PC-9 (cell line): ENCODE measurements at regions of chr7 and their contacts with region 1.

Region 1: GRCh38 chr7:51162724-51163329 is 153.8 kb downstream of the COBL start:
- DNase-seq: peak; percentile 80 to 81
- H3K4me3 ChIP-seq: no peak overlapping the region
- H3K27ac ChIP-seq: no peak overlapping the region
- H3K4me1 ChIP-seq: peaks cover 5% of the 10 kb centered on the region; the same call in 1 of the 2 replicates
- H3K27me3 ChIP-seq: no peaks in the 10 kb centered on the region
- CTCF ChIP-seq: peak; percentile 99

Region 2: DNA sequence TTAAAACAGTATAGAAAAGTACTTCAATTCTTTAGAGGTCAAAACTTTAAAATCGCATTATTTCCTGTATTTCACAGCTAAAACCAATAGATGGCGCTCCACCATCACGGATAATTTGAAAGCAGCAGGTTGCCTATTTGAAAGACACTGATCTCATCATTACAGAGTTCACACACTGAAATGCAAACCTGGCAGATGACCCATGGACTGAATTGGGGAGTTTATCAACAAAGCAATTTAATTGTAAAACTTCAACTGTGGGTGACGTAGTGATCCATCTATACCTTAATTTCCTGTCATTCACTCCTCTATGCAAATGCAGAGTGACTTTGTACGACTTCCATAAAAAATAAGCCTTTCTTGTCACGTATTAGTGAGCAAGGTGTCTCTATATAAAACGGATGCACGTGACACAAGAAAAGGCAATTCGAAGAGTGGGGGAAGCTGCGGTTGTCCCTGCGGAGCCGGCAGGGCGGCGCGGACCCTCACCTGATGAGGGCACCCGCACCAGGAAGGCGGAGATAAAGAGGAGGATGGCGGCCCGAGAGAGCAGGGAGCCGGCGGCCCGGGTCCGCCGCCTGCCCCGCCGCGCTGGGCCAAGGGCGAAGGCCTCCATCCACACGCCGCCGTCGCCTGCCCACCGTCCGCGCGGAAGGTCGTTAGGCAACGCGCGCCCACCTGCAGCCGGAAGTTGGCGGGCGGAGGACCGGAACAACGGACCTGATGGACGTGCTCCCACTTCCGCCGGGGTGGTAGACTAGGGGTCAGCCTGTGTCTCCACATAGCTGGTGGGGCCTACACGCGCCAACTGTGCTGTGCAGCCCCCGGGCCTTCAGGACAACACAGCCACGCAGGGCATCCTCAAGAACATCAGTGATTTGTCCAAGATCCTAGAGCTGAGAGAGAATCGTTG is 1070.0 kb before region 1 on chr7 and contains the start of gene ZPBP:
- CTCF ChIA-PET with region 1: interaction called, 10 read pairs
- POLR2A ChIA-PET with region 1: interaction called, 3 read pairs
- intact Hi-C with region 1: loop called (anchors 1 kb)
- DNase-seq: no peak
- H3K4me3 ChIP-seq: no peak within 1 kb of the TSS
- H3K27ac ChIP-seq: no peak within 1 kb of the TSS
- H3K4me1 ChIP-seq: no peaks in the 10 kb centered on the region
- H3K27me3 ChIP-seq: peaks cover 8% of the 10 kb centered on the region; the same call in 1 of the 2 replicates
- CTCF ChIP-seq: peak; percentile 94
- total RNA-seq, gene ZPBP: not detected in 2 replicates

Region 3: DNA sequence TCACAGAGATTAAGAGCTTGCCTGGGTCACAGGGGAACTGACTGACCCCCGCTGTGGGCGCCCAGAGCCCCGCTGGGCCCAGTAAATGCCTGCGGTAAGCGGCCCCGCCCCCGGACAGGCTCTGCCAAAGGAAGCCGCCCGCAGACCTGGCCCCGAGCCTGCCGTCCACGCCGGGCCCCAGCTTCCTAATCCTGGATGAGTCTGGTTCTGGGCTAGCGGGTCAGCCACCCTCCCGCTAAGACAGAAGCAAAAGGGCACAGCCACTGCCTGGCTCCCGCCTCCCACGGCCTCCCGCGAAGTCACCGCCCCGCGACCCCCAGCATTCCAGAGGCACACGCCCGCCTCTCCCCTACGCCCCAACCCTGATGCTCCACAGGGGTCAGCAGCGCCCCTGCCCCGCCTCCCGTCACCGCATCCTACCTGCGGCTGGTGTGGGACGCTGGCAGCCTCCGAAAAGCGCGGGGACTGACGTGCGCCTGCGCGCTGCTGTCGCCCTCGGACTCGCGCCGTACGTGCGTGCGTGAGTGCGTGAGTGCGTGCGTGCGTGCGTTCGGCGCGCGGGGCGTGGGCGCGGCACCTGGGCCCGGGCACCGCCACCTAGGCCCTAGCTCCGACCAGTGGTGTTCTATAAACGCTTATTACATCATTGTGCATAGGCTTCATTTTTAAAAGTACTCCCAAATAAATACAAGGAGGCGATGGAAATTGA is 712.8 kb before region 1 on chr7 and contains the start of gene FIGNL1:
- CTCF ChIA-PET with region 1: no interaction called
- POLR2A ChIA-PET with region 1: no interaction called
- intact Hi-C with region 1: loop called (anchors 5 kb)
- DNase-seq: peak; percentile 74 to 81
- H3K4me3 ChIP-seq: peak within 1 kb of the TSS; percentile 75
- H3K27ac ChIP-seq: peak within 1 kb of the TSS; percentile 94
- H3K4me1 ChIP-seq: peaks cover 41% of the 10 kb centered on the region
- H3K27me3 ChIP-seq: peaks cover under 1% of the 10 kb centered on the region; the same call in 1 of the 2 replicates
- CTCF ChIP-seq: no peak
- total RNA-seq, gene FIGNL1: 18.7 and 25.7 TPM in 2 replicates

Region 4: DNA sequence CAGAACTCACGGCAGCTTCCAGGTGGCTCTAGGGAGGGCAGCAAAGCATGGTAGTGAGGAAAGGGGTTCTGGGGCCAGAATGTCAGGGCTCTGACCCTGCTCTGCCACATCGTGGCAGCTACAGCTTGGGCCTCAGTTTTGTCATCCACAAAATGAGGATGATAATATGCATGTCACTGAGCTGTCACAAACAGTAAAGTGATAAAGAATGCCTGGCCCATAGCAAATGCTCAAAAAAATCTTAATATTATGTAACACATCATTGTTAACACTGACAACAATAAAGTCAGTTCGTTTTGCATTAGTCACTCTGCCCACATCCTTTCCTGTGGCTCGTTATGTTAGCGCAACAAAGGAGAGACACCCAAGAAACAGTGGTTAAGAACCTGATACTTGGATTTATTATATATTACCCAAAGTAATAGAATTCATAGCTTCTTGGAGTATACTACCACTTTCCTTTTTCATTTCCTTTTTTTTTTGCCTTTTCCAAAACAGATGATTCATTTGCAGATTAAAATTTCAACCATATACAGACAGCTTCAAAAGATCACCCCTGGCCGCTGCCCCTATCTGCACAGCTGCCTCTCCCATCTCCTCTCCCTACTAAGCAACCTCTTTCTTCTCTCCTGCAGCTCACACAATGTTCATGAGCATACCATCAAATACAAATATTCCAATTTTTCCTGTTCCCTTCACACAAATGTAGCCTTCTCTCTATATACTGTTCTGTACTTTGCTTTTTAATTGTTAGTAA is 552.1 kb before region 1 on chr7:
- CTCF ChIA-PET with region 1: no interaction called
- POLR2A ChIA-PET with region 1: no interaction called
- intact Hi-C with region 1: loop called (anchors 5 kb)
- DNase-seq: peak; percentile 14 to 45
- H3K4me3 ChIP-seq: no peak overlapping the region
- H3K27ac ChIP-seq: no peak overlapping the region
- H3K4me1 ChIP-seq: peaks cover 6% of the 10 kb centered on the region
- H3K27me3 ChIP-seq: no peaks in the 10 kb centered on the region
- CTCF ChIP-seq: no peak

Region 5: DNA sequence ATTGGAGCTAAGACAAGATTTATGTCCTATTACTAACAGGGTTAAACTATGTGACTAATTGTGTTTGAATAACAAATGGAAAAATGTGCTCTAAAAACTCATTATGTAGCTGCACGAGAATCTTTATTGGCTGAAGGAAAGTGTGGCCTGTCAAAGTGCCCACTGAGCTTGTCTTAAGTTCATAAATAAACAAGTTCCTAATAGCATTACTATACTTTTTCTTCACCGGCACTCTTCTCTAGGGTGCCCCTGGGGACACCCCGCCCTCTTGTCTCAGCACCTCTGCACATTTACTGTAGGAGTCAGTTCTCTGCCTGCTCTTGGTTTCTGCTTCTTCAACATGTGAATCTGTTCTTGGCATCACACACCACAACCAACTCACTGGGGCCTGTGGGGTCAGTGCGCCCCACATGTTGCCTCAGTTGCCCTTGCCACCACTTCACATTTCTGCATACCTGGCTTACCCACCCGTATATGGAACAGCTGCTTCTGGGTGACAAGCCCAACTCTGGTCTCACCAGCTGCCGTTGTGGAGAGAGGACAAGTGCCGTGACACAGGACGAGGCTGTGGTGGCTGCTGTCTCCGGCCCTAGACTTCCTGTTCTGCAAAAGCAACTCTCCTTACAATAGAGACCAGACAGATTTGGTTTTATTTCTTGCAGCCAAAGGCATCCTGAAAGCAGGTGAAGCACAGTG is 501.3 kb before region 1 on chr7:
- CTCF ChIA-PET with region 1: no interaction called
- POLR2A ChIA-PET with region 1: no interaction called
- intact Hi-C with region 1: no loop called
- DNase-seq: no peak
- H3K4me3 ChIP-seq: no peak overlapping the region
- H3K27ac ChIP-seq: no peak overlapping the region
- H3K4me1 ChIP-seq: peaks cover 29% of the 10 kb centered on the region
- H3K27me3 ChIP-seq: no peaks in the 10 kb centered on the region
- CTCF ChIP-seq: no peak

Region 6: GRCh38 chr7:50842041-50842440 is 320.8 kb before region 1 on chr7:
- CTCF ChIA-PET with region 1: no interaction called
- POLR2A ChIA-PET with region 1: no interaction called
- intact Hi-C with region 1: no loop called
- DNase-seq: no peak
- H3K4me3 ChIP-seq: no peak overlapping the region
- H3K27ac ChIP-seq: no peak overlapping the region
- H3K4me1 ChIP-seq: no peaks in the 10 kb centered on the region
- H3K27me3 ChIP-seq: peaks cover 4% of the 10 kb centered on the region; the same call in 1 of the 2 replicates
- CTCF ChIP-seq: no peak

Region 7: DNA sequence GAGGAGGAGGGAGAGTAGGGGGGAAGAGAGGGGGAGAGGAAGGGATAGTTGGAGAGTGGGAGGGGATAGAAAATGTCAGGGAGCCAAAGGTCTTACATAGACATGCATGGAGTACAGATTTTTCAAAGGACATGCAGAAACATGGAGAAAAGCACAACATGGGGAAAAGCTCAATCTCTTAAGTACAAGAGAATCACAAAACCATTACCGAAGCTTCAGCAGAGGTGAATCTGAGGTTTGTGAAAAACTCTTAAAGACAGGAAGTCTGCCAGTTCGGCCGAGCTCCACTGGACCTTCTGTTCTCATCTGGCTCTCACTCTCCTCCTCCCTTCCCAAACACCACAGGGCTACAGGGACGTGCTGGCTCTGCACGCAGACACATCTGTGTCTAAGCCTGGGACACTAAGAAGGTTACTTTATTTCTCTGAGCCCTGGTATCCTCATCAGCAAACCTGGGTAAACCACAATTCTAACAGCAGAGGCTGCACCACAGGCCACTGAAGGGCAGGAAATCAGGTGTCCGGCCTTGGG is 19.9 kb after region 1 on chr7:
- CTCF ChIA-PET with region 1: no interaction called
- POLR2A ChIA-PET with region 1: no interaction called
- intact Hi-C with region 1: no loop called
- DNase-seq: no peak
- H3K4me3 ChIP-seq: no peak overlapping the region
- H3K27ac ChIP-seq: no peak overlapping the region
- H3K4me1 ChIP-seq: no peaks in the 10 kb centered on the region
- H3K27me3 ChIP-seq: no peaks in the 10 kb centered on the region
- CTCF ChIP-seq: no peak

Region 8: DNA sequence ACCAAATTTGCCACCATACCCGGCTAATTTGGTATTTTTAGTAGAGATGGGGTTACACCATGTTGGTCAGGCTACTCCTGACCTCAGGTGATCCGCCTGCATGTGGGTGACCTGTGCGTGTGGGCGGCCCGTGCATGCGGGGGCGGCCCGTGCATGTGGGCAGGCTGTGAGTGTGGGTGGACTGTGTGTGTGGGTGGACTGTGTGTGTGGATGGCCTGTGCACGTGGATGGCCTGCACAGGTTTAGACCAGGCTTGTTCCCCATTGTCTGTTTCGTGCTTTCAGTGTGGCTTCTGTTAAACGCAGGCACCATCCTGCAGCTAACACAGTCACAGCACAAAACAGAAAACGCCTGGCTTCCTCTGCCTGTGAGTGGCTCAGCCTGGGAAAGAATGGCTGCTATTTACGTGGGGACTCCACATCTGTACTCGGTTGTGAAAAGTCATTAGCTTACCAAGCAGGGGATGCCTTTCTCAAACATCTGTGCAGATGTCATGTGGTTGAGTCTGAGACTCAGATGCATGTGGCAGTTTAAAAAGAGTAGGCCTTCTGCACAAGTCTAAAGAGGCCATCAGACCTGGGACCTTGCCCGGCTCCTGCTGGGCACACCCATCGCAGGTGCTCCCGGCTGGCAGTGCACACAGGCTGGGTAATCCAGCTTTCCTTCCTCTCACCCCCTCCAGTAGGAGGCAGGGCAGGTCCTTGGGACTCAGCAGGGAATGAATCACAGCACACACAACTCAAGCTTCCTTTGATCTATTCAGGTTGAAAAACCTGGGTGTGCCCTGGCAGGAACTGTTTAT is 62.2 kb after region 1 on chr7:
- CTCF ChIA-PET with region 1: interaction called, 14 read pairs
- POLR2A ChIA-PET with region 1: no interaction called
- intact Hi-C with region 1: loop called (anchors 1 kb)
- DNase-seq: peak; percentile 72 to 73
- H3K4me3 ChIP-seq: no peak overlapping the region
- H3K27ac ChIP-seq: no peak overlapping the region
- H3K4me1 ChIP-seq: peaks cover 18% of the 10 kb centered on the region
- H3K27me3 ChIP-seq: no peaks in the 10 kb centered on the region
- CTCF ChIP-seq: peak; percentile 85

Region 9: GRCh38 chr7:51376420-51377092 is 213.7 kb after region 1 on chr7:
- CTCF ChIA-PET with region 1: interaction called, 15 read pairs
- POLR2A ChIA-PET with region 1: no interaction called
- intact Hi-C with region 1: no loop called
- DNase-seq: peak; percentile 59 to 100
- H3K4me3 ChIP-seq: no peak overlapping the region
- H3K27ac ChIP-seq: peak overlapping the region; percentile 80
- H3K4me1 ChIP-seq: peaks cover 21% of the 10 kb centered on the region
- H3K27me3 ChIP-seq: no peaks in the 10 kb centered on the region
- CTCF ChIP-seq: no peak